AG04450 (cell line): ENCODE measurements at regions of chr11 and their contacts with region 1.

Region 1: DNA sequence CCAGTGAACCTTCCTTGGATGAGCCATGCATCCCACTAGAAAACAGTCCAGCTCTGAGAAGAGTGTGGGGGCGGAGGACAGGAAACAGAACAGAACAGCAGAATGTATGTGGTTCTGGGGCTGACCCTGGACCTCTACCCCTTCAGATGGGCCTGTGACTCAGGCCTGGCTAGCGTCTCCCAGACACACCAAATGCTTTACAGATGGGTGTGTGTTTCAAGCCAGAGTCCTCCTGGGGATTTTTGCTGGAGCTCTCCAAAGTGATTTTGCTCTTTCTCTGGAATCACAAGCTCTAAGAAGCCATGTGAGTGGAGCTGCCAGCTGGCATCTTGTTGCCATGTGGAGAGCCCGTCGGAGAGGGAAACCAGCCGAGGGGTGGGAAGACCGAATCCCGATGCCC is 13.2 kb upstream of the C1QTNF4 start:
- DNase-seq: peak; percentile 84
- H3K4me3 ChIP-seq: no peak overlapping the region
- H3K27ac ChIP-seq: peak overlapping the region; percentile 73
- H3K27me3 ChIP-seq: no peaks in the 10 kb centered on the region
- CTCF ChIP-seq: no peak

Region 2: DNA sequence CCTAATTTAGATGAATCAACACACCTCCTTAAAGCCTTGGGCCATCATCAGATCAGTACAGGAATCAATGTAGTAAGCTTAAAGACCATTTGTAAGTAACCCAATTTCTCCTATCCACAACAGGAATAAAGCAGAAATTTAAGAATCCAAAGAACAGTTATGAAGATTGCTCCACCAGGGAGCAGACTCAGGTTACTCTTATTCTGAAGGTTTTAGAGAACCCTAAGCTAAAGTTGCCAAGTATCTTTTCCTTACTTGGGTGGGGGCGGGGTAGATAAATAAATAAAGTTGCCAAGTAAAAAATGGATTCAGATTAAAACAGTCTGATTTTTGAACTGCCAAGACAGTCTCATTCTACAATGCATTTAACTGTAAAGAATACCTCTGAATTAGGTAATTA is 779.4 kb before region 1 on chr11:
- CTCF ChIA-PET with region 1: no interaction called
- POLR2A ChIA-PET with region 1: interaction called, 11 read pairs
- DNase-seq: no peak
- H3K4me3 ChIP-seq: no peak overlapping the region
- H3K27ac ChIP-seq: no peak overlapping the region
- H3K27me3 ChIP-seq: no peaks in the 10 kb centered on the region
- CTCF ChIP-seq: no peak

Region 3: DNA sequence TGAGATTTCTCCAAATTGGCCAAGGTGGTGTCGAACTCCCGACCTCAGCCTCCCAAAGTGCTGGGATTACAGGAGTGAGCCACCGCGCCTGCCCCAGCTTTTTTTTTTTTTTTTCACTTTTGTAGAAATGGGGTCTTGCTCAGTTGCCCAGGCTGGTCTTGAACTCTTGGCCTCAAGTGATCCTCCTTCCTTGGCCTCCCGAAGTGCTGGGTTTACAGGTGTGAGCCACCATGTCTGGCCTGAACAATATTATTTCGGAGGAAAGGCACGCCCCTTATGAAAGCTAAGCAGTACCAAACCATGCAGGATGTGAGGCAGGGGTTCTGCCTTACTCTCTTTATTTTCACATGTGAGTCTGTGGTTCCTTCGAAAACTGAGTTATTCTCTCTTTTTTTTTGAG is 18.9 kb after region 1 on chr11:
- CTCF ChIA-PET with region 1: no interaction called
- POLR2A ChIA-PET with region 1: no interaction called
- DNase-seq: no peak
- H3K4me3 ChIP-seq: no peak overlapping the region
- H3K27ac ChIP-seq: no peak overlapping the region
- H3K27me3 ChIP-seq: no peaks in the 10 kb centered on the region
- CTCF ChIP-seq: no peak